ENCODE measurements at regions of chr4 and their contacts with region 1.

Region 1: GRCh38 chr4:102826890-102827673 is at the start of gene UBE2D3:
- DNase-seq: peak; percentile 95
- H3K4me3 Mint-ChIP-seq: no peak within 1 kb of the TSS
- H3K27ac Mint-ChIP-seq: no peak within 1 kb of the TSS
- H3K4me1 Mint-ChIP-seq: peaks cover 32% of the 10 kb centered on the region
- H3K27me3 Mint-ChIP-seq: no peaks in the 10 kb centered on the region
- total RNA-seq, gene UBE2D3: 429 and 432 TPM in 2 replicates

Region 2: DNA sequence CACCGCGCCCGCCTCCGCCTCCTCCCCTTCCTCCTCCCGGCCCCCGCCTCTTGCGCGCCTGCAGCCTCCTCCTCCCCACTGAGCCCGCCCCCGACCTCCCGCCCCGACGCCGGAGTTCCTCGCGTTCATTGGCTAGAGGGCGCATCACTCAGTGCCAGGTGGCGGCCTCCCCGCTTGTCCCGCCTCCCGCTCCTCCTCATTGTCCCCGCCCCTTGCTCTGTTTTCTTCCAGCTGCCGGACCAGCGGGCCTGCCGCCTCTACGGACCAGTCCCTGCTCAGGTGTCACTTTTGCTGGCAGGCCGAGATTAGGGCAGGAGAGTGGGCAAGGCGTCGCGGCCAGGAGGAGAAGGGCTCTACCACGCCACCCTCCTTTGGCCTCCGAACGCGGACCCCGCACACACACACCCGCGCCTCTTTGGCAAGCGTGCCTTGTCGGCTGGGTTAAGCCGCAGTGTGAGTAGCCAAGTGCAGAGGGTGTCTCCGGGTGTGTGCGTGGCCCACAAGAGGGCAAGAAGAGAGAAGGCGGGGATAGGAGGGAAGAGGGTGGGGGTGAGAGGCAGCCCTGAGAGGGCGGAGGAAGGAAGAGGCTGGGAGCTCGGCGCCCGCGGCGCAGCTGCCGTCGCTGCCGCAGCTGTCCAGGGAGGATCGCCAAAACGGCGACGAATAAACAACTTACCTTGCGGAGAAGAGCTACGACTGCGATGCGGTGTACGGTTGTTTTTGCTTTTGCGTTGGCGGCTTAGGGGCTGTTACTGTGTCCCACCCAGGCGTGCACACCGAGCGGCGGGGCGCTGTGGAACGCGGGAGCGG is 1479.3 kb before region 1 on chr4:
- intact Hi-C with region 1: loop called (anchors 2 kb)
- DNase-seq: peak; percentile 96
- H3K4me3 Mint-ChIP-seq: peak overlapping the region; percentile 87
- H3K27ac Mint-ChIP-seq: peak overlapping the region; percentile 72
- H3K4me1 Mint-ChIP-seq: peaks cover 31% of the 10 kb centered on the region
- H3K27me3 Mint-ChIP-seq: peaks cover 41% of the 10 kb centered on the region

Region 3: GRCh38 chr4:102449751-102450352 is 377.2 kb before region 1 on chr4:
- intact Hi-C with region 1: loop called (anchors 5 kb)
- DNase-seq: peak; percentile 42
- H3K4me3 Mint-ChIP-seq: no peak overlapping the region
- H3K27ac Mint-ChIP-seq: no peak overlapping the region
- H3K4me1 Mint-ChIP-seq: peaks cover 65% of the 10 kb centered on the region
- H3K27me3 Mint-ChIP-seq: no peaks in the 10 kb centered on the region

Region 4: GRCh38 chr4:102760645-102761295 is 66.3 kb before region 1 on chr4 and contains the start of gene MANBA:
- intact Hi-C with region 1: loop called (anchors 1 kb)
- DNase-seq: peak; percentile 79
- H3K4me3 Mint-ChIP-seq: peak within 1 kb of the TSS; percentile 95
- H3K27ac Mint-ChIP-seq: peak within 1 kb of the TSS; percentile 84
- H3K4me1 Mint-ChIP-seq: peaks cover 33% of the 10 kb centered on the region
- H3K27me3 Mint-ChIP-seq: peaks cover 19% of the 10 kb centered on the region
- total RNA-seq, gene MANBA: 9.4 and 11.3 TPM in 2 replicates

Region 5: DNA sequence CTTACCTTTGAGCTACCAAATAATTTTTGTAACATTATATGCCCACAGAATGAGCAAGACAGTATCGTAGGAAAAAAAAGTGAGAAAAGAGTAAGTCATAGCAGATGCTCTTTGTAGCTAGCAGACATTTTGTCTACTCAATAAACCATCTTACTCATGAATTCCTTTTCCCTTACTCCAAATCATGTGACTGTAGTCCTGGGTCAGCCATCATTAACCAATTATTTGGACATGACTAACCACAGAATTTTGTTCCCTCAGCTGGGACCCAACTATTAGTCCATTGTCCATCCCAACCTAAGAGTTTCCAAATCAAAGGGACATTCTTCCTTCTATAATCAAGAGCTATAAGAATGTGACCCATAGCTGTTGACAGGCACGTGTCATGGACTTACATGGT is 11.1 kb before region 1 on chr4:
- intact Hi-C with region 1: loop called (anchors 1 kb)
- DNase-seq: no peak
- H3K4me3 Mint-ChIP-seq: no peak overlapping the region
- H3K27ac Mint-ChIP-seq: peak overlapping the region; percentile 76
- H3K4me1 Mint-ChIP-seq: peaks cover 77% of the 10 kb centered on the region
- H3K27me3 Mint-ChIP-seq: no peaks in the 10 kb centered on the region

Region 6: DNA sequence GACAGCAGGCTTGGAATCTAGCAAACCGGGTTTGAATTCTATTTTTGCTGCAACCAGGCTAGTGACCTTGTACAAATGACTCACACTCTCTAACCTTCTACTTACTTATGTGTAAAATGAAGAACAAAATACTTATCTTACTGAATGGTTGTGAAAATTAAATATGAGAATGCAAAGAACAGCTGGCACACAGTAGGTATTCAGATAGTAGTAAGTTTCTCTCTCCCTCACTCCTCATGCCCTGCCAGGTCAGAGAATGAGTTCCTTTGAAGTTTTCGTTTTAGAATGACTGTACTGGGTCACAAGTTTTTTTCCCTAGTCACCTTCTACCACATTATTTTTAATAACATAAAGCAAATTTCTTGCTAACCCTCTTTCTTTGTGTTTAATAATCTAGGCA is 74.7 kb after region 1 on chr4:
- intact Hi-C with region 1: no loop called
- DNase-seq: no peak
- H3K4me3 Mint-ChIP-seq: no peak overlapping the region
- H3K27ac Mint-ChIP-seq: no peak overlapping the region
- H3K4me1 Mint-ChIP-seq: no peaks in the 10 kb centered on the region
- H3K27me3 Mint-ChIP-seq: no peaks in the 10 kb centered on the region

Region 7: GRCh38 chr4:103075901-103076739 is 249.0 kb after region 1 on chr4:
- intact Hi-C with region 1: loop called (anchors 1 kb)
- DNase-seq: peak; percentile 66
- H3K4me3 Mint-ChIP-seq: peak overlapping the region; percentile 90
- H3K27ac Mint-ChIP-seq: peak overlapping the region; percentile 98
- H3K4me1 Mint-ChIP-seq: peaks cover 45% of the 10 kb centered on the region
- H3K27me3 Mint-ChIP-seq: no peaks in the 10 kb centered on the region